Tibial artery (tissue), 4 donors: ENCODE measurements at regions of chr6 and their contacts with region 1.

Region 1: GRCh38 chr6:98653179-98653578 is 181.2 kb upstream of the POU3F2 start:
- DNase-seq: no peak
- H3K4me3 ChIP-seq: no peak overlapping the region
- H3K27ac ChIP-seq: no peak overlapping the region
- H3K4me1 ChIP-seq: no peaks in the 10 kb centered on the region
- H3K27me3 ChIP-seq: no peaks in the 10 kb centered on the region
- CTCF ChIP-seq: no peak

Region 2: DNA sequence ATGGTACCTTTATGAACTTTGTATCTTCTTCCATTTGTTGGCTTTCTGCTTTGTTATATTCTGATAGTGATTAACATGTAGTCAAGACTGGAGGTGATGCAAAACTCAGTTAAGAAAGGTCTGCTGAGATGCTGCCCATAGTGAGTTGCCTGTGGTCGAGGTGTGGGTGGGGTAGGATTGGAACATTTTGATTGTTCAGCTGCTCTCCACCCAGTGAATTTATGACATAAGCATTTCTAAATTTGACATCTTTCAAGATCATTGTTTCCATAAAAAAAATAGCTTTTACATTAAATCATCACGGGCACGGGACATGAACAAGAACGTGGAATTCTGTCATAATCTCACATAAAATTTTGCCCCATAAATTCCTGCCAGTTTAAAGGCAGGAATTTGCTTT is 34.6 kb after region 1 on chr6:
- intact Hi-C with region 1: loop called (anchors 2 kb)
- DNase-seq: no peak
- H3K4me3 ChIP-seq: no peak overlapping the region
- H3K27ac ChIP-seq: no peak overlapping the region
- H3K4me1 ChIP-seq: no peaks in the 10 kb centered on the region
- H3K27me3 ChIP-seq: peaks cover 0 to 3% of the 10 kb centered on the region in 2 donors
- CTCF ChIP-seq: no peak